Activated CD4-positive, alpha-beta memory T cell treated with anti-CD3 and anti-CD28 coated beads for 36 hours (primary cell): ENCODE measurements at regions of chr11 and their contacts with region 1.

Region 1: GRCh38 chr11:123069908-123070821 is 8.2 kb upstream of the HSPA8 start:
- DNase-seq: no peak
- H3K4me3 Mint-ChIP-seq: peak overlapping the region; percentile 76
- H3K27ac Mint-ChIP-seq: peak overlapping the region; percentile 92
- H3K4me1 Mint-ChIP-seq: peaks cover 58% of the 10 kb centered on the region
- H3K27me3 Mint-ChIP-seq: no peaks in the 10 kb centered on the region

Region 2: DNA sequence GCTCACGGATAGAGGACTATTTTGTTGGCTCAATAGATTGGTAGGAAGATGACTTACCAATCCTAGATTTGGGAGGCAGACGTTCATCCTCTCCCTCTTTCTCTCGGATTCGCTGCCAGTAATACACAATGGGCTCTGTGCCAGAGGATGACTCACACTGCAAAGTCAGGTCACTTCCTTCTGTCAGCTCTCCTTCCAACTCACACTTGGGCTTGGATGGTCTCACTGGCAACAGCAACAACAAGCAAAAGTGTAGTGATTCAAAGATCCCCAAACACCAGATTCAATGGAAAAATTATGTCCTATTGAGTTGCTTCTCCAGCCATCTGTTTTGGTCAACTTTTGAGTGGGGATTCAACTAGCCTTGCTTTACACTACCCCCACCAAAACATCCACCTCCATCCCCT is 13.5 kb after region 1 on chr11:
- CTCF ChIA-PET with region 1: interaction called, 4 read pairs
- POLR2A ChIA-PET with region 1: interaction called, 11 read pairs
- intact Hi-C with region 1: loop called (anchors 1 kb)
- DNase-seq: peak; percentile 91
- H3K4me3 Mint-ChIP-seq: peak overlapping the region; percentile 58
- H3K27ac Mint-ChIP-seq: peak overlapping the region; percentile 85
- H3K4me1 Mint-ChIP-seq: peaks cover 63% of the 10 kb centered on the region
- H3K27me3 Mint-ChIP-seq: no peaks in the 10 kb centered on the region

Region 3: DNA sequence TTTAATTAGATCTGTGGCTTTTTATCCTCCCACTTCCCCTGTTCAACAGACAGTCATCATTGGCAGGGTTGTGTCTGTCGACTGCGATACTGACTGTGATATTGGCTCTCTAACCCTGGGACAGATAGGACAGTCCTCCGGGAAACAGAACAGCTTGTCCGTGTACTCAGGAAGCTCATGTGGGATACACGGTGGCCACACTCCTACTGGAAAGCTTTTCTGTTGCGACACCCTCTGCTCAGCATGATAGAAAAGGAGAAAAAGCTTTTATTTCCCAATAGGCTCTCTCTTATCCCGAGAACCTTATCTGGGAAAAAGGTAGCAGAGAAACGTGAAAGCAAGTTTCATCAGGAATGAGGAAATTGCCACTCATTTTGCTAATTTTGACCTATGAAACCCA is 52.2 kb after region 1 on chr11:
- CTCF ChIA-PET with region 1: no interaction called
- POLR2A ChIA-PET with region 1: no interaction called
- intact Hi-C with region 1: no loop called
- DNase-seq: no peak
- H3K4me3 Mint-ChIP-seq: no peak overlapping the region
- H3K27ac Mint-ChIP-seq: no peak overlapping the region
- H3K4me1 Mint-ChIP-seq: peaks cover 10% of the 10 kb centered on the region
- H3K27me3 Mint-ChIP-seq: peaks cover 8% of the 10 kb centered on the region